ENCODE measurements at regions of chr2 and their contacts with region 1.

Region 1: GRCh38 chr2:119820275-119820674 is 60.6 kb downstream of the PTPN4 start:
- DNase-seq: no peak
- H3K4me3 Mint-ChIP-seq: no peak overlapping the region
- H3K27ac Mint-ChIP-seq: no peak overlapping the region
- H3K4me1 Mint-ChIP-seq: peaks cover 41% of the 10 kb centered on the region
- H3K27me3 Mint-ChIP-seq: no peaks in the 10 kb centered on the region

Region 2: GRCh38 chr2:119419803-119420508 is 400.3 kb before region 1 on chr2:
- CTCF ChIA-PET with region 1: no interaction called
- intact Hi-C with region 1: no loop called
- DNase-seq: no peak
- H3K4me3 Mint-ChIP-seq: no peak overlapping the region
- H3K27ac Mint-ChIP-seq: no peak overlapping the region
- H3K4me1 Mint-ChIP-seq: no peaks in the 10 kb centered on the region
- H3K27me3 Mint-ChIP-seq: peaks cover 10% of the 10 kb centered on the region

Region 3: GRCh38 chr2:119803101-119803500 is 17.2 kb before region 1 on chr2:
- CTCF ChIA-PET with region 1: interaction called, 3 read pairs
- intact Hi-C with region 1: loop called (anchors 2 kb)
- DNase-seq: no peak
- H3K4me3 Mint-ChIP-seq: no peak overlapping the region
- H3K27ac Mint-ChIP-seq: no peak overlapping the region
- H3K4me1 Mint-ChIP-seq: peaks cover 53% of the 10 kb centered on the region
- H3K27me3 Mint-ChIP-seq: no peaks in the 10 kb centered on the region

Measured in activated naive CD4-positive, alpha-beta T cell treated with anti-CD3 and anti-CD28 coated beads for 36 hours (primary cell).